ENCODE measurements at regions of chr14 and their contacts with region 1.

Region 1: GRCh38 chr14:53295985-53296582 is 143.0 kb upstream of the DDHD1 start:
- DNase-seq: no peak
- H3K4me3 ChIP-seq: no peak overlapping the region
- H3K27ac ChIP-seq: no peak overlapping the region
- H3K4me1 ChIP-seq: no peaks in the 10 kb centered on the region
- H3K27me3 ChIP-seq: no peaks in the 10 kb centered on the region
- CTCF ChIP-seq: peak; percentile 57

Region 2: GRCh38 chr14:53249059-53249458 is 47.0 kb before region 1 on chr14:
- intact Hi-C with region 1: no loop called
- DNase-seq: no peak
- H3K4me3 ChIP-seq: no peak overlapping the region
- H3K27ac ChIP-seq: no peak overlapping the region
- H3K4me1 ChIP-seq: no peaks in the 10 kb centered on the region
- H3K27me3 ChIP-seq: no peaks in the 10 kb centered on the region
- CTCF ChIP-seq: no peak

Region 3: DNA sequence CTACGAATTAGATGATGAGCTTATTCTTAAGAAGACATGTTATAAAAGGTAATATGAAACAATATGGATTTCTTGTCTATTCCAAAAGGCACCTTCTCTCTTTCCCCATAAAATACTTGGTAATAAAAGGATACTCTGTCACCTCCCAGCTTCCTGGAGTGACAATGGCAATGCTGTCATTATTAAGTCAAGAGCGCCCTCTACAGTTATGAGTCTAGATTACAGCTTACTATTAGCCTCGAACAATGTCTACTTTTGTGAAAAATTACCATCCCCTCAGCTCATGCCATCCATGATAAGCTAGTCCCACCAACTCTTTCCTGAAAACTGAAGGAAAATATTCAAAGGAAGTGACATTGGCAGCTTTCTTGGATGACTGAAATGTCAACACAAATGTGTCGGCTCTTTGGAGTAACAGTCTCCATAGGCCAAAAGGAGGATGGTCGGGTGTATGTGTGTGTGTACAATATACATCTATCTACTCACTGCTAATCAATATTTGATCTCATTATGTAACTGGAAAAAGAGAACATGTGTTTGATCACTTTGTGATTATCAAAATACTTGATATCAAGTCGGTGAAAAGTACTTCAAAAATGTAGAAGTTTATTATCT is 1052.0 kb after region 1 on chr14:
- intact Hi-C with region 1: loop called (anchors 5 kb)
- DNase-seq: no peak
- H3K4me3 ChIP-seq: no peak overlapping the region
- H3K27ac ChIP-seq: no peak overlapping the region
- H3K4me1 ChIP-seq: no peaks in the 10 kb centered on the region
- H3K27me3 ChIP-seq: no peaks in the 10 kb centered on the region
- CTCF ChIP-seq: peak; percentile 57